Activated naive CD4-positive, alpha-beta T cell treated with anti-CD3 and anti-CD28 coated beads for 36 hours (primary cell): ENCODE measurements at regions of chr10 and their contacts with region 1.

Region 1: GRCh38 chr10:34994565-34995142 is 95.5 kb downstream of the CUL2 start:
- DNase-seq: peak; percentile 78
- H3K4me3 Mint-ChIP-seq: no peak overlapping the region
- H3K27ac Mint-ChIP-seq: peak overlapping the region; percentile 70
- H3K4me1 Mint-ChIP-seq: peaks cover 18% of the 10 kb centered on the region
- H3K27me3 Mint-ChIP-seq: no peaks in the 10 kb centered on the region

Region 2: GRCh38 chr10:34666008-34666705 is 328.5 kb before region 1 on chr10:
- CTCF ChIA-PET with region 1: interaction called, 8 read pairs
- intact Hi-C with region 1: loop called (anchors 1 kb)
- DNase-seq: peak; percentile 16
- H3K4me3 Mint-ChIP-seq: no peak overlapping the region
- H3K27ac Mint-ChIP-seq: no peak overlapping the region
- H3K4me1 Mint-ChIP-seq: peaks cover 2% of the 10 kb centered on the region
- H3K27me3 Mint-ChIP-seq: peaks cover 16% of the 10 kb centered on the region

Region 3: DNA sequence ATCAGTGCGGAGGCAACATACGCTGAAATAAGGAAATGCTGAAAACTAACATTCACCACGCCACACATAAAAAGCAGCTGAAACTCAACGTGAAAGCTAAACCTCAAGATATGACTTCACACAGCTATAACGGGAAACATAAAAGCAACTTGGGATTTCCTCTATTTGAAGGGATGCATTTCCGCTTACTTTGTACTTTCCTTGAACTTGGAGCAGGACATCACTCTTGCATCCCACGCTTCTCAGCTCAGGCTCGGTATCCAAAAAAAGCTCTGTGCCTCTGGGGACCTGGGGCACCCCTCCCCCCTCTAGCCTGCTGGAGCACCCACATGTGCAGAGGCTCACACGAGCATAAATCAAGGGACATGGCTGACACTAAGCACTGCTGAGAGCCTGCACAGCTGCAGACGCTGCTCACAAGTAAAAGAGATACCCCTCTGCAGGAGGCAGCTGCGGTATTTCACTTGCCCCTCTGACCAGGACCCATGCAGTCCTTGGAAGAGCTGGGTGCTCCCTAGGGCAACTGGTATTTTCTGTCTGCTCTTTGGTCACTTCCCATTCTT is 213.8 kb before region 1 on chr10:
- CTCF ChIA-PET with region 1: no interaction called
- intact Hi-C with region 1: no loop called
- DNase-seq: peak; percentile 9
- H3K4me3 Mint-ChIP-seq: peak overlapping the region; percentile 2
- H3K27ac Mint-ChIP-seq: no peak overlapping the region
- H3K4me1 Mint-ChIP-seq: peaks cover 10% of the 10 kb centered on the region
- H3K27me3 Mint-ChIP-seq: peaks cover 24% of the 10 kb centered on the region

Region 4: GRCh38 chr10:35090162-35090954 is 95.7 kb after region 1 on chr10 and contains the start of gene CUL2:
- CTCF ChIA-PET with region 1: no interaction called
- intact Hi-C with region 1: loop called (anchors 2 kb)
- DNase-seq: peak; percentile 94
- H3K4me3 Mint-ChIP-seq: peak within 1 kb of the TSS; percentile 90
- H3K27ac Mint-ChIP-seq: peak within 1 kb of the TSS; percentile 92
- H3K4me1 Mint-ChIP-seq: peaks cover 45% of the 10 kb centered on the region
- H3K27me3 Mint-ChIP-seq: no peaks in the 10 kb centered on the region
- total RNA-seq, gene CUL2: 35.3 to 36.9 TPM

Region 5: GRCh38 chr10:35300063-35300699 is 305.5 kb after region 1 on chr10:
- CTCF ChIA-PET with region 1: no interaction called
- intact Hi-C with region 1: no loop called
- DNase-seq: no peak
- H3K4me3 Mint-ChIP-seq: no peak overlapping the region
- H3K27ac Mint-ChIP-seq: no peak overlapping the region
- H3K4me1 Mint-ChIP-seq: no peaks in the 10 kb centered on the region
- H3K27me3 Mint-ChIP-seq: peaks cover 6% of the 10 kb centered on the region

Region 6: GRCh38 chr10:35336084-35336831 is 341.6 kb after region 1 on chr10 and contains the start of gene CCNY:
- CTCF ChIA-PET with region 1: no interaction called
- intact Hi-C with region 1: loop called (anchors 5 kb)
- DNase-seq: peak; percentile 81
- H3K4me3 Mint-ChIP-seq: peak within 1 kb of the TSS; percentile 85
- H3K27ac Mint-ChIP-seq: peak within 1 kb of the TSS; percentile 87
- H3K4me1 Mint-ChIP-seq: peaks cover 71% of the 10 kb centered on the region
- H3K27me3 Mint-ChIP-seq: no peaks in the 10 kb centered on the region
- total RNA-seq, gene CCNY: 31.2 to 32.1 TPM

Region 7: DNA sequence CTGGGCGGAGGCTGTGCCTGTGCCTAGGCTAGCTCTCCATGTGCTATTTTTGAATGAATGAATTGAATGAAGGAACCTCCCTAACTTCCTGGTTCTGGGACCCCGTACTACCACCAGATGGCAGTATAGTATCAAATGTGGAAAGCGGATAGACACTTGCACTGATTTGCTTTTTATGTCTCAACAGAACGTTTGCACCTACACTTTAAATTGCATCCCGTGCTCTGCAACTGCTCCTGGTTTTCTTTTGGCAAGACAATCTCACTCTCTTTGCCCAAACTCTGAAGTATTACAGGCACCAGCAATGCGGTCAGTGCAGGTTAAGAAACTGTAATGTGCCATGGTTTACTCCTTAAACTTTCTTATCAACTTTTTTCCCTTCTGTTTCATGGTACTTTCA is 640.9 kb after region 1 on chr10:
- CTCF ChIA-PET with region 1: interaction called, 4 read pairs
- intact Hi-C with region 1: loop called (anchors 1 kb)
- DNase-seq: peak; percentile 63
- H3K4me3 Mint-ChIP-seq: no peak overlapping the region
- H3K27ac Mint-ChIP-seq: no peak overlapping the region
- H3K4me1 Mint-ChIP-seq: peaks cover 7% of the 10 kb centered on the region
- H3K27me3 Mint-ChIP-seq: peaks cover 45% of the 10 kb centered on the region